ENCODE measurements at regions of chr9 and their contacts with region 1.

Region 1: DNA sequence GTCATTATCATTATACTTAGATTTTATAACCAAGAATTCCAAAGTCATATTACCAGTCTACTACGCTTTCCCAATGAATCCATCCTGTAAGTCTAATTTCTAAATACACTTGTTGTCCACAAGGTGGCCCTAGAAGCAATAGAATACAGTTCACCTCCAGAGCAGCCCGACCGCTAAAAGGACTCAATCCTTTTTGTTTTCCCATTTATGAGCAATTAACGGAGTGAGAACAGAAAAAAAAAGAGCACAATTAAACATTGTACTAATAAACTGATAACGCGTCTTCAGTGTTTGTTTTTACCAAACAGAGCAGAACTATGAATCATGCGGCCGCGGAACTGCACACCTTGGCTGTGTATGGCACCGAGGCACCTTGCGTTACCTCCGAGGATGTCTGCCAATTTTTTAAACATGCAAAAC is 160.7 kb upstream of the DAPK1 start:
- DNase-seq: peak; percentile 64
- H3K4me3 ChIP-seq: peak overlapping the region; percentile 20 to 34 (median 25)
- H3K27ac ChIP-seq: no peak overlapping the region
- H3K4me1 ChIP-seq: peaks cover 16% of the 10 kb centered on the region
- H3K27me3 ChIP-seq: no peaks in the 10 kb centered on the region
- CTCF ChIP-seq: peak; percentile 58 to 66

Region 2: GRCh38 chr9:86604741-86605140 is 732.2 kb before region 1 on chr9:
- CTCF ChIA-PET with region 1: no interaction called
- dilution Hi-C with region 1: no loop called
- in situ Hi-C with region 1: no loop called
- intact Hi-C with region 1: no loop called
- DNase-seq: no peak
- H3K4me3 ChIP-seq: no peak overlapping the region
- H3K27ac ChIP-seq: no peak overlapping the region
- H3K4me1 ChIP-seq: peaks cover 12% of the 10 kb centered on the region
- H3K27me3 ChIP-seq: no peaks in the 10 kb centered on the region
- CTCF ChIP-seq: no peak

Region 3: GRCh38 chr9:87441251-87441820 is 104.4 kb after region 1 on chr9:
- CTCF ChIA-PET with region 1: no interaction called
- dilution Hi-C with region 1: no loop called
- in situ Hi-C with region 1: no loop called
- intact Hi-C with region 1: loop called (anchors 5 kb)
- DNase-seq: peak; percentile 63
- H3K4me3 ChIP-seq: no peak overlapping the region
- H3K27ac ChIP-seq: no peak overlapping the region
- H3K4me1 ChIP-seq: no peaks in the 10 kb centered on the region
- H3K27me3 ChIP-seq: no peaks in the 10 kb centered on the region
- CTCF ChIP-seq: no peak

Region 4: DNA sequence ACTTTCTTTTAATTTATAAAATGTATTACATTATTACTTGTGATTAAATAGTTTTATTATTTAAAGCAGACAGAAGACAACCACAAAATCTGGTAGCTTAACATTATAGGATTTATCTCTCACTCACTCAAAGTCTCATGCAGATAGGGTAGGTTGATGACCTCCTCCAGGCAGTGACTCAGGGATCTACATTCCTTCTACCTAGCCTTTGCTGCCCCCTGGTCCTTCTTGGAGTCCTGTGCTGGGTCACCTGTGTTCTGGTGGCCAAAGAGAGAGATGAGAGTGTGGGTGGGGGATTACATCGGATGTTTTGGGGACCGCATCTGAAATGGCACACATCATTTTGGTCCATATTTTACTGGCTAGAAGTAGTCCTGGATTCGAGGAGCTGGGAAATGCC is 293.3 kb after region 1 on chr9:
- CTCF ChIA-PET with region 1: no interaction called
- dilution Hi-C with region 1: no loop called
- in situ Hi-C with region 1: no loop called
- intact Hi-C with region 1: loop called (anchors 1 kb)
- DNase-seq: no peak
- H3K4me3 ChIP-seq: no peak overlapping the region
- H3K27ac ChIP-seq: no peak overlapping the region
- H3K4me1 ChIP-seq: no peaks in the 10 kb centered on the region
- H3K27me3 ChIP-seq: no peaks in the 10 kb centered on the region
- CTCF ChIP-seq: peak in 1 of 2 donors; percentile 10

Region 5: GRCh38 chr9:87812375-87813118 is 475.6 kb after region 1 on chr9:
- CTCF ChIA-PET with region 1: no interaction called
- dilution Hi-C with region 1: no loop called
- in situ Hi-C with region 1: loop called (anchors 10 to 25 kb)
- intact Hi-C with region 1: loop called (anchors 1 kb)
- DNase-seq: peak; percentile 62
- H3K4me3 ChIP-seq: no peak overlapping the region
- H3K27ac ChIP-seq: no peak overlapping the region
- H3K4me1 ChIP-seq: peaks cover 10% of the 10 kb centered on the region
- H3K27me3 ChIP-seq: no peaks in the 10 kb centered on the region
- CTCF ChIP-seq: peak; percentile 98 to 100